ENCODE measurements at regions of chr9 and their contacts with region 1.

Region 1: DNA sequence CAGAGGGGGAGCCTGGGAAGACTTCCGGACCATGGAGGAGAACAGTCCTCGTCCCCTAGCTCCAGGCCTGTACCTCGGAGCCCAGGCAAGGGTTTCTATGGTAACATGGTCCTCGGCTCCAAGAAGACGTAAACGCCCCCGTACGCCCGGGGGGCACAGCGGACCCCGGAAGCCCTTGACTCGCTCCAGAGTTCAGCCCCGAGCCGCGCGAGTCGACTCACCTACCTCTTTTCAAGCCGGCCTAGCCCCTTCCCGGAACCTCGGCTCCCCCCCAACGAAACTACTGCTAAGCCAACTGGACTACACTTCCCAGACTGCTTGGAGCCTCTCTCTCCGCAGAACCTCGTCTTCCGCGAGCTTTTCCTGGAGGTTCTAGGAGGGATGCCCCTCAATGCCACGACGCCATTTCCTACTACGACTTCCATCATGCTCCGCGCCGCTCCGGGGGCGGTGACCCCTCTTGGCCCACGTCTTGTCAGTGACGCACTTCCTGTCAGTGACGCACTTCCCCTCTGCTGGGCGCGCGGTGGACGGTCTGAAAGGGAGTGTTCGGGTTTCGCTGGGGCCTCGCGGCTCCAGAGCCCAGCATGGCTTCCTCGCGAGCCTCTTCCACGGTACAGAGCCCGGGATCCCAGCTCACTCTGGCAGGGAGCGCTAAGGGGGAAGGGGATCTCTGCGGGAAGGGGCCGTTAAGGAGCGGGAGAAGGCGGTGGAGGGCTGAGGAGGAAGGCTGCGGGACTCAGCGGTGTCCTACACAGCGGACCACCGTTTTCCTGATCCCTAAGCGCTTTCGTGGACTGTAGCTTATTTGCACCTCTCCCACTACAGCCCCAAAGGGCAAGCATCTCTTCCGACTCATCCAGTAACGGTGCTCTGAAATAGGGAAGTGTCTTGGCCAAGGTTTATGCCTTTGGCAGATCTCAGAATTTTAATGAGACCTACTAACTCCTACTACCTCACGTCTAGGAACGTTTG is at the starts of genes CDC26 and PRPF4:
- DNase-seq: peak; percentile 97
- ATAC-seq: peak; percentile 98
- total RNA-seq, gene CDC26: 33.3 to 33.8 TPM
- total RNA-seq, gene PRPF4: 9.9 to 14.3 TPM

Region 2: DNA sequence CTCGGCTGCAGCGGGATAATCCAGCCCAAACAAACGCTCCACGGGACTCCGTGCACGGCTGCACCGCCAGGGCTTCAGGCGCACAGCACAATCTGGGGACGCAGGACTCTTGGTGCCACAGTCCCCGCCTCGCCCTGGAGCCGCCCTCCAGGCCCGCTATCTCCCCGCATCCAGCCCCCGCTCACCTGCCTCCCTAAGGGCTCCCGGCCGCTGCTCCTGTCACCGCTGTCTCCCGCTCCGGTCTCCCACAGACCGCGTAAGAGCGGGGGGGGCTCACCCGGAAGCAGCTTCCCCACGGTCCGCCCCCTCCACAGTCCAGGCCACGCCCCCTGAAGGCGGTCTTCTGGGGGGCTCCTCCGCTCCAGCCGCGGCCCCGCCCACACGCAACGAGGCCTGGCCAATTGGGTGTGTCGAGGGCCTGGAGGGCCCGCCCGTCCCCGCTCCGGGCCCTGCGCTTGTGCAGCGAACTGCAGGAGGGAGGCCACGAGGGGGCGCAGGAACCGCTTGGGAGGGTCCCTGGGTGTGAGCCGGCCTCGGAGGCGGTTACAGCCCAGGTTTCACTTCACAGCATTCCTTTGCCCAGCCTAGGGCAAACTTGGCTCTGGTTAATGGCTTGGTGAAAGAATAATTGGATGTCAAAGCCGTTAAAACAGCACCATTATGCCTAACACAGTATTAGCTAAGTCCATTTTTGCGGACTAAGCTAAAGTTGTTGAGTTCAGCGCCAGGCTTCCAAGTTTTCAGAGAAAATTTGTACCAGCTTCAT is 125.8 kb after region 1 on chr9 and contains the start of gene ALAD:
- intact Hi-C with region 1: loop called in 1 of 2 experiments (anchors 10 kb)
- DNase-seq: peak; percentile 99
- ATAC-seq: peak; percentile 100
- total RNA-seq, gene ALAD: 32.8 to 39.1 TPM

Region 3: DNA sequence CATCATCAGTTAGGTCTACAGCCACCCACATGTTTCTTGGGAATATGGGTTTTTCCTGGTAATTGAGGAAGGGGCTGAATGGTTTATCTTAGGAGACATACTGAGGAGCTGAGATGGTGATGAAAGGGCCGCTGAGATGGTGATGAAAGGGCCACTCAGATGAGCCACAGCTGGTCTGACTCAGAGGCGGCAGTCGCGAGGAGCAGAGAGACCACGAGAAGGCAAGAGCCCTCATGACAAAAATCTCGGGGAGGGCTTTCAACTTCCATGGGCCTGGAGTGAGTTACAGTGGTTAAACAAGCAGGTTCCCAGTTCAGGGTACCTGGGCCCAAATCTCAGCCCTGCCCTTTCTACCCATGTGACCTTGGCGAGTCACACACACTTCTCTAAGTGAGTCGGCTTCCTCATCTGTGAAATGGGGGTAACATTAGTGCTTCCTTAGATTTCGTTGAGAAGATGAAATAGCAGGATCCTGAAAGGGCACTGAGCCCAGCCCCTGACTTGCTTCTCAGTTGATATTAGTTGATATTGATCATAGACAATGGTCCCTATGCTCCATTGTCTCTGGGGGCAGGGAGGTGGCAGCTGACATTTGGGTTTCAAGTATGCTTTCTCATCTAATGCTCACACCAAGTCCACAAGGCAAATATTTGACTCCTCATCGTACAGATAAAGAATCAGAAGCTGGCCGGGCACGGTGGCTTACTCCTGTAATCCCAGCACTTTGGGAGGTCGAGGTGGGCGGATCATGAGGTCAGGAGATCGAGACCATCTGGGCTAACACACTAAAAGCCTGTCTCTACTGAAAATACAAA is 357.5 kb after region 1 on chr9:
- intact Hi-C with region 1: no loop called
- DNase-seq: no peak
- ATAC-seq: peak in 1 of 2 donors; percentile 36

Region 4: GRCh38 chr9:113657703-113658544 is 382.5 kb after region 1 on chr9:
- intact Hi-C with region 1: loop called in 1 of 2 experiments (anchors 10 kb)
- DNase-seq: peak; percentile 88
- ATAC-seq: peak; percentile 69 to 73

Measured in left cardiac atrium (tissue), 4 donors.